ENCODE measurements at regions of chr11 and their contacts with region 1.

Region 1: DNA sequence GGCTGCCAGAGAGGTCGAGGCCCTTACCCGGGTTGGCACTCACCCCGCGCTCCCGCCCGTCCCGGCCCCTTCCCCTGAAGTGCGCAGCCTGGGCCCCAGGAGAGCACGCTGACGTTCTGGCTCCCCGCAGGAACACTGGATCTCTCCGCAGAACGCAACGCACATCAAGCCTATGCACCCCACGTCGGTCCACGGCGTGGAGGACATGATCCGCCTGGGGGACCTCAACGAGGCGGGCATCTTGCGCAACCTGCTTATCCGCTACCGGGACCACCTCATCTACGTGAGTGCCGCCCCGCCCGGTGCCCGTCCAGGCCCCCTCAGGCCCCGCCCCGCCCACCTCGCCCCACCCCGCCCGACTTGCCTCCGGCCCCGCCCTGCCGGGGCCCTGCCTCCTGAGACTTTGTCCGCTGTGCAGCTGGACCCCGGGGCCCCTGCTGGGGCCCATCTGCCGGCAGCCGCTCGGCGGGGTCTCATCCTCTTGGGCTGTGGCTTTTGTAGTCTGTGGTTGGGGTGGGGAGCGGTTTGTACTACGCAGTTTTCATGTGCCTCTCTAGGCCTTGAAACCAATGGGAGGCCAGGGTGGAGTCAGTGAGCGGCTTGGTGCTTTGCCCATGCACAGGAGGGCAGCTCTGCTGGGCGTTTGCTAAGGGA is 19.7 kb downstream of the MYO7A start:
- DNase-seq: no peak
- ATAC-seq: peak; percentile 82
- H3K4me3 ChIP-seq: peak overlapping the region in 1 of 2 experiments; percentile 28; a peak in 2 of 4 replicates
- H3K27ac ChIP-seq: no peak overlapping the region
- H3K4me1 ChIP-seq: no peaks in the 10 kb centered on the region
- H3K27me3 ChIP-seq: no peaks in the 10 kb centered on the region
- CTCF ChIP-seq: no peak

Region 2: DNA sequence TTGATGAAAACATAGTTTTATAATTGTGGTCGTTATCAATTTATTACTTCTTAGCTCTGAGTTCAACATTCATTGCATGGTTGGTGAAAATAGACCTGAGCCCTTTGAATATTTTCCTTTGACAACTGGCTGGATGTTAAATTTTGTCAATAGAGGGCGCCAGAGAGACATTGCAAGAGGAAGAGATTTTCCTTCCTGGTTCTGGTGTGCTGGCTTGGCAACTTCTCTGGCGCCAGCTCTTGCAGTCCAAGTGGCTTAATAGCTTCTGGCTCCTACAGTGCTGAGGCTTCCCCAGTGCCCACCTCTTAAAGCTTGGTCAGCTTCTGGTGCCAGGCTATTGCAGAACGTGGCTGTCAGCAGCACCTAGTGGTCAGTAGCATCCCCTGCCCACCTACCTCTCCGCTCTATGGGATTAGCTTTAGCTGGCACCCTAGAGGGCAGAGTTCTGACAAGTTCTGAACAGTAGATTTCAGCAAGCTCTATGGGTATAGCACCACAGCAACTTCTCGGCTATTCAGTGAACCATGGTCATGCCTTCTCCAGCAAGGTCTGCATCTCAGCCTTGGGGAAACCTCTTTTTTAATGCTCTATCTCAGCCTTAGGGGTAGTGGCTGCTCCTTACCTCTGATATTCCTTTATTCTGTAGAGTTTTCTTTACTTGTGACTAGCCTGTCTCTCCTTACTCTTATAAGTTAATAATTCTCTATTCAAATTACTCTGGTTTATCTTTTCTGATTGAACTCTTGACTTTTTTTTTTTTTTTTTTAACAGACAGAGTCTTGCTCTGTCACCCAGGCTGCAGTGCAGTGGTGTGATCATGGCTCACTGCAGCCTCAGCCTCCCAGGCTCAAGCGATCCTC is 227.7 kb before region 1 on chr11:
- CTCF ChIA-PET with region 1: no interaction called
- POLR2A ChIA-PET with region 1: no interaction called
- in situ Hi-C with region 1: no loop called
- intact Hi-C with region 1: no loop called
- DNase-seq: peak; percentile 70
- ATAC-seq: peak; percentile 95
- H3K4me3 ChIP-seq: 0 out of 4 replicates have a peak overlapping the region, but pooled peaks of 1 of the 2 experiments have one; percentile 19
- H3K27ac ChIP-seq: no peak overlapping the region
- H3K4me1 ChIP-seq: peaks cover 7% of the 10 kb centered on the region
- H3K27me3 ChIP-seq: no peaks in the 10 kb centered on the region
- CTCF ChIP-seq: peak; percentile 99

Region 3: DNA sequence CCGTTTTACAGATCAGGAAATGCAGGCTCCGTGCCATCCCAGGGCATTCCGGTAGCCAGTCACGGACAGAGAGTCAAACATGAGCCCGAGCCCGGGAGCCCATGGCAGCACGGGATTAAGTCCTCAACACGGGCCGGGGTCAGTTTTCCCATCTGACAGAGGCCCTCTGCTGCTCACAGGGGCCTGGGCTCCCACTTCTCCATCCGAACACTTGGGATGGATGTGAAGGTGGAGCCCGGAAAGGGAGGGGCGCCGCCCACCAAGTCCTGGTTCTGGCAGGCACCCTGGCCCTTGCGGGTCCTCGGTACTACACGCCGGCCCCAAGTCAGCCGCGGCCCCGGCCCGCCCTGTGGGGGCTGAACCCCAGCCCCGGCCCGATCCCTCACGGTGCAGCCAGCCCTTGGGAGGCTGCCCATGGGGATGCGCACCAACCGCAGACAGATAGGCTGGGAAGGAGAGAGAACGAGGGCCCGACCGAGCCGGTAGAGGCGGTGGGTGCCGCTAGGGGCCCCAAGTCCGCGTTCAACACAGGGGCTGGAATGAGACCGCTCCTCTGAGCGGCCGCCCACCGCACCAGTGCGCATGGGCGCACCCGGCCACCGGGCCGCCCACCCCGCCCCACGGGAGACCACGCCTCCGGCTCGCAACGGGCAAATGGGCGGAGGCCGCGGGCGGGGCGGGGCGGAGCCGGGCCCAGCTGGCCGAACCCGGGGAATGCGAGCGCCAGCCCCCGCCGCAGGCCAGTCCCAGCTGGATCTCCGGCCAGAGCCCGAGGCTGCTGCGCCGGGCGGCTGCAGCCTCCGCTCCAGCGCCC is 81.4 kb before region 1 on chr11 and contains the start of gene CAPN5:
- CTCF ChIA-PET with region 1: no interaction called
- POLR2A ChIA-PET with region 1: no interaction called
- in situ Hi-C with region 1: loop called (anchors 10 kb)
- intact Hi-C with region 1: no loop called
- DNase-seq: no peak
- ATAC-seq: peak; percentile 94
- H3K4me3 ChIP-seq: peak within 1 kb of the TSS; percentile 74 to 79
- H3K27ac ChIP-seq: peak within 1 kb of the TSS; percentile 77
- H3K4me1 ChIP-seq: peaks cover 6% of the 10 kb centered on the region
- H3K27me3 ChIP-seq: no peaks in the 10 kb centered on the region
- CTCF ChIP-seq: no peak; the same call in 1 of the 2 replicates
- total RNA-seq, gene CAPN5: 17.3 TPM